Heart right ventricle (tissue), 16 donors: ENCODE measurements at regions of chr22 and their contacts with region 1.

Region 1: DNA sequence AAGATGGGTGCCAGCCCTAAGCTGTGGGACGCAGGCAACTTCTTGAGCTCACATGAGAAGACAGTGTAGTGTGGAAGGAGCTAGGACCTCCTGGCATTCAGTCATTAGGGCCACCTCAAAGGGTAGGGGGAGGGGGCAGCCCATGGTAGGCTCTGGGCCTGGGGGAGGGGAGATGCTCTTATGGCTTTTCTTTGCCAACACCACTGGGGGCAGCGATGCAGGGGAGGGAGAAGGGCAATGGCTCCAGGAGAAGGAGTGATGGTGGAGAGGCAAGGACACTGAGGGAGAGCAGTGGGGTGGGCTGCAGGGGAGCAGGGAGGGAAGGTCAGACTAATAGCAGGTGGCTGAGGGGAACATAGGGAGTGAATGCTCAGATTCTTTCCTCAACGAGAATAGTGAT is 63.3 kb upstream of the SUSD2 start:
- DNase-seq: no peak
- ATAC-seq: no peak
- H3K4me3 ChIP-seq: no peak overlapping the region
- H3K27ac ChIP-seq: no peak overlapping the region
- H3K4me1 ChIP-seq: peaks cover 13 to 31% (median 27%) of the 10 kb centered on the region in 9 donors
- H3K27me3 ChIP-seq: no peaks in the 10 kb centered on the region
- CTCF ChIP-seq: no peak

Region 2: GRCh38 chr22:24060375-24060788 is 57.6 kb before region 1 on chr22:
- intact Hi-C with region 1: no loop called
- DNase-seq: peak in 1 of 2 donors; percentile 34
- ATAC-seq: peak in 7 of 8 donors; percentile 47 to 76 (median 64)
- H3K4me3 ChIP-seq: no peak overlapping the region
- H3K27ac ChIP-seq: peak overlapping the region in 4 of 10 donors; percentile 5 to 72 (median 30)
- H3K4me1 ChIP-seq: peaks cover 6 to 33% (median 20%) of the 10 kb centered on the region in 9 donors
- H3K27me3 ChIP-seq: no peaks in the 10 kb centered on the region
- CTCF ChIP-seq: no peak

Region 3: GRCh38 chr22:24156913-24157821 is 39.2 kb after region 1 on chr22:
- intact Hi-C with region 1: loop called in 1 of 10 experiments (anchors 10 kb)
- DNase-seq: peak; percentile 83 to 84
- ATAC-seq: peak; percentile 77 to 89 (median 86)
- H3K4me3 ChIP-seq: peak overlapping the region; percentile 57 to 90 (median 81)
- H3K27ac ChIP-seq: peak overlapping the region in 9 of 10 donors; percentile 76 to 93 (median 90)
- H3K4me1 ChIP-seq: peaks cover 30 to 75% (median 57%) of the 10 kb centered on the region in 9 donors
- H3K27me3 ChIP-seq: no peaks in the 10 kb centered on the region
- CTCF ChIP-seq: peak; percentile 74 to 93 (median 84)

Region 4: GRCh38 chr22:24170248-24170630 is 52.3 kb after region 1 on chr22:
- intact Hi-C with region 1: loop called in 2 of 10 experiments (anchors 5 to 10 kb)
- DNase-seq: no peak
- ATAC-seq: no peak
- H3K4me3 ChIP-seq: no peak overlapping the region
- H3K27ac ChIP-seq: no peak overlapping the region
- H3K4me1 ChIP-seq: peaks cover 6 to 29% (median 13%) of the 10 kb centered on the region in 9 donors
- H3K27me3 ChIP-seq: no peaks in the 10 kb centered on the region
- CTCF ChIP-seq: no peak